ENCODE measurements at regions of chr15 and their contacts with region 1.

Region 1: DNA sequence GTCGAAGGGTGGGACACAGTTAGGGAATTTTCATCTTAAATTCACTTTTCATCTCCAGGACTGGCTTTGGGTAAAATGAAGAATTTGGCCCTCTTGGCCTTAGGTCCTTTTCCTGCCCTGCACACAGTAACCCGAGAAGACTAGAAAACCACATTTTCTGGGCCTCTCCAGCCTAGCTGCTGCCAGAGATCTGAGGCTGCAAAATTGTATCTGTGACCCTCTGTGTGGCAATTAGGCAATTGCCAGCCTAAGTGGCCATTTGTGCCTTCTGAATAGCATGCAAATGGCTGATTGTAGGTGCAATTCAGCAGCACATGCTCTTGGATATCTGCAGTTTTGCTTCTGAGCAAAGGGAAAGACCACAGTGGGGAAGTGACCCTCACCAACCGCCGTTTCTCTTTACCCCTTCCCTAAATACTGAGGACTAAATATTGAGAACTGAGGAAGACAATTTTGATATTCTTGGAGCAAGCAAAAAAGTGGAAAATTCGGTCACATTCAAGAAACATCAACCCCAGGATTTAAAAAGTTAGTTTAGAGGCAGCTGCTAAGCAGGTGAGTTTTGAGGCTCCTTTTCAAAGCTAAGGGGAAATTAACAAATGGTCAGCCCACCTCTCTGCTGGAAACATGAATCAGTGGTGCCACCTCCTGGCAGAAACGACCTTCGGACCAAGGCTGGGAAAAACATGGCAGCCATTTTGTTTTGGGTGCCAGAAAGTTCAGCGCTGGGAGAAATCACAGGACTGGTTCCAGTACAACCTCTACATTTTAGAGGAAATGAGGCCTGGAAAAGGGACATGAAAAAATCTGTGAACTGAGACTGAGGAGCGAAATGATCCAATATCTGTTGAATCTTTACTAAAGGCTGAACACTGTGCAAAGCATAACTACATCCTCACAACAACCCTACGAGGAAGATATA is 56.6 kb upstream of the PRTG start:
- ATAC-seq: peak; percentile 70 to 90 (median 84)
- H3K4me3 ChIP-seq: no peak overlapping the region
- H3K27ac ChIP-seq: no peak overlapping the region
- H3K4me1 ChIP-seq: peaks cover 6 to 12% of the 10 kb centered on the region in 2 donors

Region 2: GRCh38 chr15:55044162-55044561 is 755.4 kb before region 1 on chr15:
- in situ Hi-C with region 1: no loop called
- ATAC-seq: peak in 4 of 8 experiments; percentile 55 to 96 (median 78)
- H3K4me3 ChIP-seq: no peak overlapping the region
- H3K27ac ChIP-seq: peak overlapping the region; percentile 9 to 53
- H3K4me1 ChIP-seq: peaks cover 0 to 10% of the 10 kb centered on the region in 2 donors

Region 3: GRCh38 chr15:55518641-55519040 is 280.9 kb before region 1 on chr15:
- in situ Hi-C with region 1: loop called in 1 of 9 experiments (anchors 25 kb)
- ATAC-seq: no peak
- H3K4me3 ChIP-seq: no peak overlapping the region
- H3K27ac ChIP-seq: no peak overlapping the region
- H3K4me1 ChIP-seq: no peaks in the 10 kb centered on the region

Region 4: GRCh38 chr15:55649054-55649423 is 150.5 kb before region 1 on chr15:
- in situ Hi-C with region 1: loop called in 4 of 9 experiments (anchors 5 to 25 kb)
- ATAC-seq: no peak
- H3K4me3 ChIP-seq: no peak overlapping the region
- H3K27ac ChIP-seq: no peak overlapping the region
- H3K4me1 ChIP-seq: peaks cover 22 to 26% of the 10 kb centered on the region in 2 donors

Region 5: GRCh38 chr15:55661428-55661827 is 138.1 kb before region 1 on chr15:
- in situ Hi-C with region 1: loop called in 2 of 9 experiments (anchors 25 kb)
- ATAC-seq: peak in 3 of 8 experiments; percentile 33 to 42 (median 34)
- H3K4me3 ChIP-seq: no peak overlapping the region
- H3K27ac ChIP-seq: no peak overlapping the region
- H3K4me1 ChIP-seq: peaks cover 37 to 49% of the 10 kb centered on the region in 2 donors

Region 6: GRCh38 chr15:56856934-56857333 is 1057.4 kb after region 1 on chr15:
- in situ Hi-C with region 1: no loop called
- ATAC-seq: no peak
- H3K4me3 ChIP-seq: no peak overlapping the region
- H3K27ac ChIP-seq: no peak overlapping the region
- H3K4me1 ChIP-seq: no peaks in the 10 kb centered on the region

Measured in motor neuron (in vitro differentiated cells).